MCF 10A (cell line): ENCODE measurements at regions of chr7 and their contacts with region 1.

Region 1: DNA sequence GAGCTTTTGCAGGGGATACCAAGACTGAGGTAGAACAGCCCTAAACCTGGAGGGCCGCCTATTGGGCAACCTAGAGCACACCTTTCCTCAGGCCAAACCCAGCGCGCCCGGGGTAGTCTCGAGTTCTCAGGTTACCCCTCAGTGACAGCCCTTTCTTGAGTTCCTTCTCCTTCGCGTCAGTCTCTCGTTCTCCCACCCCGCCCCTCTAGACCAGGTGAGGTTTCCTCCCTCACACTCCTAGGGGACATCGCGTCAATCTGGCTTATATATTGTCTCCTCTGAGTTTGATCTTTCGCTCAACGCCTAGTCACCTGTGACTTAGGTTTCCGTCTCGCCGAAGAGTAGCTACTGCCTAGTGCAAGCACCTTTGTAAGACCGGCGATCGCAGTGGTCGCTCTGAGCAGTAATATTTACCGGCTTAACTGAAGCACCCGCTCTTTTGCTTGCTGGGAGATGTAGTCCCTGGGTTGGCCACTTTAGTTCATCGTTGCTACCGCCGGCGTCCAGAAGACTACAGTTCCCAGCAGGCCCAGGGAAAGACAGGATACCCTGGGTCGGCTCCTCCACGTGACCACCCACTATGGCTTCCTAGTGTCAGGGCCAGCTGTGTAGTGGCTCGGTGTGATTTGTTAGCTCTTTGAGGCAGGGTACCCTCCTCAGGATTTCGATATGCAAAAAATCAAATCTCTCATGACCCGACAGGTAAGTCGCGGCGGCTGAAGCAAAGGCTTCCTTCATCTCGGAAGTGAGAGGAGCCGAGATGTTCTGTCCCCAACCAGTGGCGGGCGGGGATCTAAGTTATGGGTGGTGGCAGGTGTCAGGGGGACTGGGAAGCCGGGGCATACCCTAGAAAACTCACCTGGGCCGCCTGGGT is at the start of gene VPS50:
- DNase-seq: peak; percentile 97
- H3K4me3 Mint-ChIP-seq: peak within 1 kb of the TSS; percentile 96
- H3K27ac Mint-ChIP-seq: peak within 1 kb of the TSS; percentile 73
- H3K4me1 Mint-ChIP-seq: no peaks in the 10 kb centered on the region
- H3K27me3 Mint-ChIP-seq: peaks cover 8% of the 10 kb centered on the region
- CTCF ChIP-seq: no peak
- total RNA-seq, gene VPS50: 15.2 and 22.4 TPM in 2 replicates

Region 2: GRCh38 chr7:92880212-92881090 is 351.6 kb before region 1 on chr7:
- CTCF ChIA-PET with region 1: no interaction called
- POLR2A ChIA-PET with region 1: no interaction called
- intact Hi-C with region 1: no loop called
- DNase-seq: peak; percentile 42
- H3K4me3 Mint-ChIP-seq: no peak overlapping the region
- H3K27ac Mint-ChIP-seq: no peak overlapping the region
- H3K4me1 Mint-ChIP-seq: peaks cover 2% of the 10 kb centered on the region
- H3K27me3 Mint-ChIP-seq: no peaks in the 10 kb centered on the region
- CTCF ChIP-seq: no peak

Region 3: DNA sequence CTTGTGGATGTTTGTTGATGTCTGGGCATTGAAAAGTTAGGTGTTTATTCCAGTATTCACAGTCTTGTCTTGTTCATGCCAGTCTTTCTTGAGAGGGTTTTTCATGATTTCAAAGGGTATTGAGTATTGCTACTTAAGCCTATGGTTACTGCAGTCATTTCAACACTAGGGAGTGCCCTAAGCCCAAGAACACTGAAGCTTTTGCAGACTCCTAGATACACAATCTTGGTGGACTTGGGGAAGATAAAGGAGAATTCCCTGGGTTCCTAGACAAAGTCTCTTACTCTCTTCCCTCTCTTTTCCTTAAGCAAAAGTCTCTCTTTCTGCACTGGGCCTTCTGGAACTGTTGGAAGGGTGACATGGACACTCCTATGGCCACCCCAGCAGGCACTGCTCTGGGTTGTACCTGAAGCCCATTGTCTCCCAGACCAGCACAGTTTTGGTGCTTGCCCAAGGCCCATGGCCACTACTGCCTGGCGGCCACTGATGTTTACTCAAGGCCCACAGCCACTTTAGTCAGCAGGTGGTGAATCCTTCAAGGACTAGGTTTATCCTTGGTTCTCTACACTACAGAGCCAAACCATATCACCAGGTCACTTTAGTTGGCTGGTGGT is 139.2 kb before region 1 on chr7:
- CTCF ChIA-PET with region 1: interaction called, 30 read pairs
- POLR2A ChIA-PET with region 1: interaction called, 6 read pairs
- intact Hi-C with region 1: loop called (anchors 1 kb)
- DNase-seq: peak; percentile 56
- H3K4me3 Mint-ChIP-seq: no peak overlapping the region
- H3K27ac Mint-ChIP-seq: no peak overlapping the region
- H3K4me1 Mint-ChIP-seq: no peaks in the 10 kb centered on the region
- H3K27me3 Mint-ChIP-seq: peaks cover 95% of the 10 kb centered on the region
- CTCF ChIP-seq: peak; percentile 72

Region 4: GRCh38 chr7:93117852-93118530 is 114.0 kb before region 1 on chr7 and contains the start of gene SAMD9:
- CTCF ChIA-PET with region 1: interaction called, 3 read pairs
- POLR2A ChIA-PET with region 1: interaction called, 21 read pairs
- intact Hi-C with region 1: no loop called
- DNase-seq: peak; percentile 88
- H3K4me3 Mint-ChIP-seq: peak within 1 kb of the TSS; percentile 81
- H3K27ac Mint-ChIP-seq: peak within 1 kb of the TSS; percentile 89
- H3K4me1 Mint-ChIP-seq: peaks cover 41% of the 10 kb centered on the region
- H3K27me3 Mint-ChIP-seq: no peaks in the 10 kb centered on the region
- CTCF ChIP-seq: no peak
- total RNA-seq, gene SAMD9: 4.4 and 7.9 TPM in 2 replicates

Region 5: DNA sequence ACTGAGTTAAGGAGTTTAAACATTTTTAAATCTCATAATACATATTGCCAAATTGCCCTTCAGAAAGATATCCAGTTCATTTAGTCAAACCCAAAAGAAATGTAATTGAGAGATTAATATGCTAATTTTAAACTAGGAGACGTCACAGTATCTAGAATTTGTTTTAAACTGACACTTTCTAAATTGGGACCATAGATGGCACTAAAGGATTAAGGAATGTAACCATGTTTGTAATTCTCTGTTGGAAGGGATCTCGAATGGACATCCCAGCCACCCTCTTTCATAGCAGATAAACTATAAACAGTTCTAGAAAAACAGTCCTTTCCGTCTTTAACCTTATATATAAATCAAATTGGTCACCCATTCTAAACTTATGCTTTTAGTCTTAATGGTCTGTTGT is 53.8 kb before region 1 on chr7:
- CTCF ChIA-PET with region 1: interaction called, 9 read pairs
- POLR2A ChIA-PET with region 1: no interaction called
- intact Hi-C with region 1: loop called (anchors 1 kb)
- DNase-seq: no peak
- H3K4me3 Mint-ChIP-seq: no peak overlapping the region
- H3K27ac Mint-ChIP-seq: no peak overlapping the region
- H3K4me1 Mint-ChIP-seq: no peaks in the 10 kb centered on the region
- H3K27me3 Mint-ChIP-seq: peaks cover 64% of the 10 kb centered on the region
- CTCF ChIP-seq: peak; percentile 40

Region 6: DNA sequence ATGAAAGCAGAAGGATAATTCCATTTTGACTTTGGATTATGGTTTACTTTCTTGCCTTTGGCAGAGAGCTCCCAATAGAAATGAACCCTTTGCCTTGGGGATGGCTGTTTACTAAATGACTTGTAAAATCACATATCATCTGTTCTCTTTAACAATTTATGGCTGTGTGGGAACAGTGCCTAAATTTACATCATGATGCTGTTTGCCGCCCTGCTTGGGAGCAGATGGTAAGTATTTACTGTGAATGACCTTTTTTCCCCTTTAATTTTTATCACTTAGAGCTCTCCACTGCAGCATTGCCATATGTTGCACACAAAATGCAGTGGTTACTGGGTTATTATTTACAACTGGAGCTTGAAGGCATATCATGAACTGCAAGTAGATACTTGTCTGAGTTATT is 19.2 kb before region 1 on chr7:
- CTCF ChIA-PET with region 1: interaction called, 15 read pairs
- POLR2A ChIA-PET with region 1: interaction called, 3 read pairs
- intact Hi-C with region 1: no loop called
- DNase-seq: no peak
- H3K4me3 Mint-ChIP-seq: no peak overlapping the region
- H3K27ac Mint-ChIP-seq: no peak overlapping the region
- H3K4me1 Mint-ChIP-seq: no peaks in the 10 kb centered on the region
- H3K27me3 Mint-ChIP-seq: peaks cover 21% of the 10 kb centered on the region
- CTCF ChIP-seq: no peak

Region 7: GRCh38 chr7:93245525-93246432 is 13.7 kb after region 1 on chr7:
- CTCF ChIA-PET with region 1: interaction called, 29 read pairs
- POLR2A ChIA-PET with region 1: interaction called, 14 read pairs
- intact Hi-C with region 1: no loop called
- DNase-seq: peak; percentile 34
- H3K4me3 Mint-ChIP-seq: no peak overlapping the region
- H3K27ac Mint-ChIP-seq: no peak overlapping the region
- H3K4me1 Mint-ChIP-seq: no peaks in the 10 kb centered on the region
- H3K27me3 Mint-ChIP-seq: no peaks in the 10 kb centered on the region
- CTCF ChIP-seq: peak; percentile 40